ENCODE measurements at regions of chr17 and their contacts with region 1.

Region 1: DNA sequence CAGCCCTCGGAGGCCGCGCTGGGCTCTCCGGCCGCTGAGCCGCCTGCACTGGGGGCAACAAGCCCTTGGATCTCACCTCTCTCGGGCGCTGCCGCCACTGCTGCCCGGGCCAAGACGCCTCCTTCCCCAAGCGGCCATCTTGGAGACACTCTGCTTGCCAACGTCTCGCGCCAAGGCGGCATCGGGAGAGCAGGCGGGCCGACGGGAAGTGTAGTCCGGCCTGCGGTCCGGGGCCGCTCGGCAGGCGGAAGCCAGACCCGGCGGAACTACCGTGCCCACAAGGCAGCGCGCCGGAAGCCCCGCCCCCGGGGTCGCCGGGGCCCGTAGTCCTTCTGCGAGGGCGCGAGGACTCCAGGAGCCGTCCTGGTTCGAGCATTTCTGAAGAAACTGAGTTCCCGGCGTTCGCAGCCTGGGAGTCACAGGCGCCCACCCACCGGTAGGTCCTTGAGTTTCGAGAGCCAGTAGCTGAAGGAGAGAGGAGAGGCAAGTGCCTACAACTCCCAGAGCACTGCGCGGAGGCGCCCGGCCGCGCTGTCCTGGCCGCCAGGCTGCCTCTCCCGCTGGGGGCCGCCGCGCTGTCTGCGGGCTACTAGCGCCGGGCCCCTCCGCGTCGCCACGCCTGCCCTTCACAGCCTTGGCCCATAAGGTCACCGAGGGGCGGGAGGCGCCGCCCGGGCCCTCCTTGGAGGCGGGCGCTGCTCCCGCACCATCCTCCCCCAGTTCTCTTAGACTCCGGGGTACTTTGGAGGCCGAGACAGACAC is at the start of gene TMEM11:
- DNase-seq: peak; percentile 94 to 96 (median 95)
- H3K4me3 ChIP-seq: peak within 1 kb of the TSS; percentile 64 to 94
- H3K4me3 Mint-ChIP-seq: peak within 1 kb of the TSS; percentile 89 to 97 (median 92)
- H3K27ac ChIP-seq: peak within 1 kb of the TSS; percentile 92
- H3K27ac Mint-ChIP-seq: peak within 1 kb of the TSS; percentile 82 to 96 (median 93)
- H3K4me1 ChIP-seq: peaks cover 39% of the 10 kb centered on the region
- H3K4me1 Mint-ChIP-seq: peaks cover 31 to 64% (median 47%) of the 10 kb centered on the region in 4 donors
- H3K27me3 ChIP-seq: no peaks in the 10 kb centered on the region
- H3K27me3 Mint-ChIP-seq: no peaks in the 10 kb centered on the region
- total RNA-seq, gene TMEM11: 18.6 to 21.7 TPM

Region 2: GRCh38 chr17:21126645-21127510 is 87.3 kb before region 1 on chr17 and contains the start of gene DHRS7B:
- CTCF ChIA-PET with region 1: interaction called, 7 read pairs
- POLR2A ChIA-PET with region 1: interaction called, 15 read pairs
- intact Hi-C with region 1: loop called (anchors 1 kb)
- DNase-seq: peak; percentile 94 to 97 (median 94)
- H3K4me3 ChIP-seq: peak within 1 kb of the TSS; percentile 31 to 97
- H3K4me3 Mint-ChIP-seq: peak within 1 kb of the TSS; percentile 91 to 98 (median 96)
- H3K27ac ChIP-seq: peak within 1 kb of the TSS; percentile 85
- H3K27ac Mint-ChIP-seq: peak within 1 kb of the TSS; percentile 95 to 99 (median 97)
- H3K4me1 ChIP-seq: peaks cover 27% of the 10 kb centered on the region
- H3K4me1 Mint-ChIP-seq: peaks cover 20 to 42% (median 35%) of the 10 kb centered on the region in 4 donors
- H3K27me3 ChIP-seq: no peaks in the 10 kb centered on the region
- H3K27me3 Mint-ChIP-seq: no peaks in the 10 kb centered on the region
- total RNA-seq, gene DHRS7B: 8.2 to 9.5 TPM

Region 3: DNA sequence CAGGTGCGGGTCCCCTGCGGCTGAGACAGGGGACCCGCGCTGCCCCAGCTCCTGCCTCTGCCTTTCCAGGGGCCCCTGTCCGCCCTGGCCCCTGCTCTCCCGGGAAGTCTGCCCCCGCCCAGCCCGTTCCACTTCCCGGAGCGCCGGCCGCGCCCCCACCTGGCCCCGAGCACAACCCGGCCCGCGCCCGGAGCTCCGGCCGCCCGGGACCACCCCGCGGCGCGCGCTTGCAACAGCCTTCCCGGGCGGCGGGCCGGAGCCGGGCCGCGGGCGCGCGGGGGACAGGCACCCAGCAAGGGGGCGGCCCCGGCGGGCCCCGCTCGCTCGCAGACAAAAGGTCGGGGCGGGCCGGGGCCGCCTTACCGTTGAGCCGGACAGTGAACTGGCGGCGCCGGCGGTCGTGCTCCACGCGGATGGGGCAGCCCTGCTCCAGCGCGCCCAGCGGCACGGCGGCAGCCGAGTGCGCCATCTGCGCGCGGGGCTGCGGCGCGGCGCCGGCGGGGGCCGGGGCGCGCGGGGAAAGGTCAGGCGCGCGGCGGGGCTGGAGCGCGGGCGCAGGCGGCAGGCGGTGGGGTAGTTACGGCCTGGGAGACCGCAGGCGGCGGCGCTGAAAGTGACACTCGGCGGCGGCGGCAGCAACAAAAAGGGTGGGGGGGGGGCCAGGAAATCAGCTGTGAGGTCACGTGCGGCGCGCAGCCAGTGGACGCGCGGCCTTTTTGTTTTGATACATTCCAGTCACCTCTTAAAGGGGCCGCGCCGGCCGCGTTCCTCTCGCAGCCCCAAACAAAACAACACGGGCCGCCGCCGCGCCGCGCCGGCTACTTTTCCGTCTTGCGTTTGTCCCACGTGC is 38.8 kb after region 1 on chr17 and contains the start of gene NATD1:
- CTCF ChIA-PET with region 1: no interaction called
- POLR2A ChIA-PET with region 1: interaction called, 17 read pairs
- intact Hi-C with region 1: loop called (anchors 1 kb)
- DNase-seq: peak; percentile 74 to 86 (median 80)
- H3K4me3 ChIP-seq: peak within 1 kb of the TSS; percentile 38 to 71
- H3K4me3 Mint-ChIP-seq: peak within 1 kb of the TSS; percentile 88 to 95 (median 90)
- H3K27ac ChIP-seq: peak within 1 kb of the TSS; percentile 62
- H3K27ac Mint-ChIP-seq: peak within 1 kb of the TSS; percentile 90 to 95 (median 91)
- H3K4me1 ChIP-seq: peaks cover 27% of the 10 kb centered on the region
- H3K4me1 Mint-ChIP-seq: peaks cover 24 to 59% (median 34%) of the 10 kb centered on the region in 4 donors
- H3K27me3 ChIP-seq: no peaks in the 10 kb centered on the region
- H3K27me3 Mint-ChIP-seq: no peaks in the 10 kb centered on the region
- total RNA-seq, gene NATD1: 13.1 to 13.5 TPM

Region 4: GRCh38 chr17:21318439-21318838 is 104.2 kb after region 1 on chr17:
- CTCF ChIA-PET with region 1: no interaction called
- POLR2A ChIA-PET with region 1: no interaction called
- intact Hi-C with region 1: loop called (anchors 2 kb)
- DNase-seq: no peak
- H3K4me3 ChIP-seq: no peak overlapping the region
- H3K4me3 Mint-ChIP-seq: no peak overlapping the region
- H3K27ac ChIP-seq: no peak overlapping the region
- H3K27ac Mint-ChIP-seq: peak overlapping the region in 1 of 7 donors; percentile 74
- H3K4me1 ChIP-seq: no peaks in the 10 kb centered on the region
- H3K4me1 Mint-ChIP-seq: peaks cover 4 to 8% (median 6%) of the 10 kb centered on the region in 4 donors
- H3K27me3 ChIP-seq: no peaks in the 10 kb centered on the region
- H3K27me3 Mint-ChIP-seq: no peaks in the 10 kb centered on the region

Region 5: GRCh38 chr17:21457051-21458026 is 243.1 kb after region 1 on chr17:
- CTCF ChIA-PET with region 1: interaction called, 3 read pairs
- POLR2A ChIA-PET with region 1: no interaction called
- intact Hi-C with region 1: loop called (anchors 1 kb)
- DNase-seq: peak; percentile 87 to 92 (median 88)
- H3K4me3 ChIP-seq: no peak overlapping the region
- H3K4me3 Mint-ChIP-seq: peak overlapping the region in 5 of 8 donors; percentile 23 to 61 (median 49)
- H3K27ac ChIP-seq: no peak overlapping the region
- H3K27ac Mint-ChIP-seq: peak overlapping the region in 6 of 7 donors; percentile 60 to 90 (median 82)
- H3K4me1 ChIP-seq: peaks cover 11% of the 10 kb centered on the region
- H3K4me1 Mint-ChIP-seq: peaks cover 13 to 22% (median 17%) of the 10 kb centered on the region in 4 donors
- H3K27me3 ChIP-seq: no peaks in the 10 kb centered on the region
- H3K27me3 Mint-ChIP-seq: peaks cover 8 to 13% of the 10 kb centered on the region in 2 donors

Measured in CD4-positive, alpha-beta memory T cell (primary cell).